Caco-2 (cell line): ENCODE measurements at regions of chr2 and their contacts with region 1.

Region 1: GRCh38 chr2:174341286-174341994 is 6.7 kb downstream of the SP9 start:
- DNase-seq: peak; percentile 83 to 92
- H3K4me3 ChIP-seq: peak overlapping the region; percentile 49
- H3K4me3 Mint-ChIP-seq: peak overlapping the region; percentile 93
- H3K27ac Mint-ChIP-seq: no peak overlapping the region
- H3K4me1 ChIP-seq: no peaks in the 10 kb centered on the region
- H3K4me1 Mint-ChIP-seq: peaks cover 6% of the 10 kb centered on the region
- H3K27me3 ChIP-seq: no peaks in the 10 kb centered on the region; the same call in 1 of the 2 replicates
- H3K27me3 Mint-ChIP-seq: peaks cover 9% of the 10 kb centered on the region
- CTCF ChIP-seq: peak; percentile 97 to 98

Region 2: DNA sequence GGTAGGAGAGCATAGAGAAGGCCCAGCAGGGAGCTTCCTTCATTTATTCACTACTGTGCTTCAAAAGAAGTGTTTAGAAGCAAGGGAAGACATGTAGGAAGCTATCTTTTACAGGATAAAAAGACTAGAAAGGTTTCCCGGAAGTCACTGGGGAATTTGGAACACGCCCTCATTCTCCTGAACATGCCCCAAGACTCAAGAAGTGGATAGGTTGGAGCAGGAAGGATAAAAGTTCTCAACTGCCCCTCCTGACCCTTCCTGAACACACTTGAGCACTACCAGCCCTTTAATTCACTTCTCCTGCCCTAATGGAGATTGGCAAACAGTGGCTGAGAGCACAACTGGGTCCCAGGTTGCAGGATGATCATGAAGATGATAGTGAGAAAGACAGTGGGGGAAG is 468.0 kb before region 1 on chr2:
- CTCF ChIA-PET with region 1: interaction called, 11 read pairs
- POLR2A ChIA-PET with region 1: no interaction called
- intact Hi-C with region 1: no loop called
- DNase-seq: no peak
- H3K4me3 ChIP-seq: no peak overlapping the region
- H3K4me3 Mint-ChIP-seq: no peak overlapping the region
- H3K27ac Mint-ChIP-seq: no peak overlapping the region
- H3K4me1 ChIP-seq: peaks cover 19% of the 10 kb centered on the region
- H3K4me1 Mint-ChIP-seq: peaks cover 18% of the 10 kb centered on the region
- H3K27me3 ChIP-seq: no peaks in the 10 kb centered on the region
- H3K27me3 Mint-ChIP-seq: peaks cover 3% of the 10 kb centered on the region
- CTCF ChIP-seq: no peak

Region 3: GRCh38 chr2:174051741-174052583 is 289.5 kb before region 1 on chr2:
- CTCF ChIA-PET with region 1: interaction called, 10 read pairs
- POLR2A ChIA-PET with region 1: interaction called, 4 read pairs
- intact Hi-C with region 1: loop called (anchors 5 kb)
- DNase-seq: peak; percentile 92 to 94
- H3K4me3 ChIP-seq: peak overlapping the region; percentile 1
- H3K4me3 Mint-ChIP-seq: peak overlapping the region; percentile 77
- H3K27ac Mint-ChIP-seq: peak overlapping the region; percentile 90
- H3K4me1 ChIP-seq: peaks cover 40% of the 10 kb centered on the region
- H3K4me1 Mint-ChIP-seq: peaks cover 34% of the 10 kb centered on the region
- H3K27me3 ChIP-seq: no peaks in the 10 kb centered on the region
- H3K27me3 Mint-ChIP-seq: no peaks in the 10 kb centered on the region
- CTCF ChIP-seq: no peak

Region 4: DNA sequence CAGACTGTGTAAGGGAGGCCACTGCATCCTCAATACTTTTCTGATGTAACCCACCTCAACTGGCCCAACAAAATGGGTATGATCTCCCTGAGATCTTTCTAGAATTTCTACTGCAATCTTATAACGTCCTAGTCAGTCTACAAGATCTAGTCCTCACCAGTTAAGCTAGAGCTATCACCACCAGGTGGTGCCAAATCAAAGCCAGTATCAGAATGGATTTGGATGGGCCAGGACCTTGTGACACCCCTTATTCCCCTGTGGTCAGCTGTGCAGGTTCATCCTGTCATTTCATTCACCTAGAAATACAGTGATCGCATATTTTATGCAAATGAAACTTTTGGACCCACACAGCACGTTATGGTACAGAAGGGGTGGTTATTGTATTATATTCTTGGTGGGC is 183.4 kb before region 1 on chr2:
- CTCF ChIA-PET with region 1: interaction called, 24 read pairs
- POLR2A ChIA-PET with region 1: no interaction called
- intact Hi-C with region 1: loop called (anchors 1 kb)
- DNase-seq: peak; percentile 69 to 75
- H3K4me3 ChIP-seq: no peak overlapping the region
- H3K4me3 Mint-ChIP-seq: no peak overlapping the region
- H3K27ac Mint-ChIP-seq: no peak overlapping the region
- H3K4me1 ChIP-seq: no peaks in the 10 kb centered on the region
- H3K4me1 Mint-ChIP-seq: peaks cover 20% of the 10 kb centered on the region
- H3K27me3 ChIP-seq: no peaks in the 10 kb centered on the region
- H3K27me3 Mint-ChIP-seq: no peaks in the 10 kb centered on the region
- CTCF ChIP-seq: peak; percentile 56 to 80

Region 5: DNA sequence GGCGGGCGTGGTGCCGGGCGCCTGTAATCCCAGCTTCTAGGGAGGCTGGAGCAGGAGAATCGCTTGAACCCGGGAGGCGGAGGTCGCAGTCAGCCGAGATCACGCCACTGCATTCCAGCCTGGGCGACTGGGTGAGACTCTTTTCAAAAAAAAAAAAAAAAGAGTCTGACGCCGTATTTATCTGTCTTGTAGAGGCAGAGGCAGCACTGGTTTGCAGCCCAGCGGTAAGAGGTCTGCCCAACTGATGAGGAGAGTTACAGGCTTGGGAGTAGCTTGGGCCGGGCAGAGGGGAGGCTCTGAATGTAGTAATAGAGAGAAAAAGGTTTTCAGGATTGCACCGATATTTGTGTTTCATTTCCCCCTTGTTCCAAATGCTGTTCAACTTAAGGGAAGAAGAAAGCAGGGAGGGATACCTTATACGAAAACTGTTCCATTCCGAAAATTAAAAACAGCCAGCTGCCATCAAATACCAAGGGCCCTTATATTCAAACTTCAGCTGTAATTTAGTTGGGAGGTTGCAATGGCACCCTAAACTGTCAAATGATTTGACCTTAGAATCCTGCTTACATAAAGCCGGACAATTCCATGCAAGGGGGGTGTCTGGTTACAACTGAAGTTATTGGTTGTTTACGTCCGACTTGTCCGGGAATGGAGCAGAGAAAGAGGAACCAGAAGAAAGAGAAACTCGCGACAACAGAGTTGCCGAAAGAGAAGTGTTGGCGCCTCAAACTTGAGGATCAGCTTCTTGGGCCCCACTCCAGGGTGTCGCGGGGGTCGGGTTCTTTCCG is 15.9 kb before region 1 on chr2:
- CTCF ChIA-PET with region 1: interaction called, 11 read pairs
- POLR2A ChIA-PET with region 1: no interaction called
- intact Hi-C with region 1: no loop called
- DNase-seq: no peak
- H3K4me3 ChIP-seq: peak overlapping the region; percentile 55
- H3K4me3 Mint-ChIP-seq: peak overlapping the region; percentile 78
- H3K27ac Mint-ChIP-seq: no peak overlapping the region
- H3K4me1 ChIP-seq: 0 out of 2 replicates have a peak, but pooled peaks cover 2% of the 10 kb centered on the region
- H3K4me1 Mint-ChIP-seq: peaks cover 11% of the 10 kb centered on the region
- H3K27me3 ChIP-seq: no peaks in the 10 kb centered on the region
- H3K27me3 Mint-ChIP-seq: peaks cover 10% of the 10 kb centered on the region
- CTCF ChIP-seq: no peak